ENCODE measurements at regions of chr5 and their contacts with region 1.

Region 1: DNA sequence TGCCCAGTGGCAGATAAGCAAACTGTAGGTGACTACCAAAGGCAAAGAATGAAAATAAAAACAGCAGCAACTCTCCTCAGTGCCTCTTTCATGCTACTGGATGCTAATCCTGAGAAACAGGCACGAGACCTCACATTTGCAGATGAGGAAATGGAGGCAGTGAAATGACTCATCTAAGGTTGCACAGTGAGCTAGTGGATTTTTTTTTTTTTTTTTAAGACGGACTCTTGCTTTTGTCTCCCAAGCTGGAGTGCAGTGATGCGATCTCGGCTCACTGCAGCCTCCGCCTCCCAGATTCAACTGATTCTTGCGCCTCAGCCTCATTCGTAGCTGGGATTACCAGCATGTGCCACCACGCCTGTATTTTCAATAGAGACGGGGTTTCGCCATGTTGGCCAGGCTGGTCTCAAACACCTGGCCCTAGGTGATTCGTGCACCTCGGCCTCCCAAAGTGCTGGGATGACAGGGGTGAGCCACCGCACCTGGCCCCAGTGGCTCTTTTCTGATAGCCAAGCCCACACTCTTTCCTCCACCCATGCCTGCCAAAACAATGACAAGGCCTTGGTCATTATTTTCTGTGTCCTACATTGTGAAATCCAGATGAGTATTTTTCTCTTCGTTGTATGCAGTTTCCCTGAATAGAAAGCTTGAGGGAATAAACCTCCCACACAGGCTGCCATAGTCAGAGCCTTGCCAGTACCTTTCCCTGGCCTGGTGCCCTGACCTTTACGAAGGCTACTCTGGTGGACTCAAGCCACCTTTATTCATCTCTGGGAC is 19.2 kb downstream of the DOCK2 start:
- DNase-seq: no peak
- ATAC-seq: peak; percentile 76
- H3K4me3 Mint-ChIP-seq: peak overlapping the region; percentile 33
- H3K27ac Mint-ChIP-seq: peak overlapping the region; percentile 59
- H3K4me1 Mint-ChIP-seq: peaks cover 71% of the 10 kb centered on the region
- H3K27me3 Mint-ChIP-seq: no peaks in the 10 kb centered on the region
- CTCF ChIP-seq: no peak

Region 2: DNA sequence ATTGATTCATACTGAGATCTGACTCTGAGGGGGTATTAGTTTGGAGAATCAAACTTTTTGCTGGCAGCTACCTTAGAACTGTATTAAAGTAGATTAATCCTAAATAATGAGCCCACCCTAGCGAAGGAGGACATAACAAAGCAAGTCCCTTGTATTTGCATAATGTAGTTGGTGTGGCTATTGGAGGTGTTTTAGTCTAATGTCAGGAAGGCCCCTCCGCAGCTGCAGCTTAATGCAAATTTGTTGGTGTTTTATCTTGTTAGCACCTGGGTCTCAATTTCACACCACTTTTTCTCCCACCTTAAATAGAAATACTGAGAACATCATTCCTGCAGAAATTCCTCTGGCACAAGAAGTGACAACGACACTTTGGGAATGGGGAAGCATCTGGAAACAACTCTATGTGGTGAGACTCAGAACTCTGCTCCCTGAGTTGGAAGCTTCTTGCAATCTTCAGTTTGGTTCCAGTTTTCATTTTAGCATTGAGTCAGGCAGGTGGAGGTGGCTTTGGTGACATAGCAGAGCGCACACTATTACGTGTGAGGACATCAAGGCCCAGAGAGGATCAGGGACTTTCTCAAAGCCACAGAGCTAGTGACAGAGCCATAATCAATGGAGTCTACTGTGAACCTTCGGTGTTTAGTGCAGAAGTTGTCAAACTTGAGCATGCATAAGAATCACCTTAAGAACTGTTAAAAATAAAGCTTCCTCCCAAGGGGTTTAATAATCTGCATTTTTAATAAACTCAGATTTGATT is 14.6 kb after region 1 on chr5:
- CTCF ChIA-PET with region 1: no interaction called
- POLR2A ChIA-PET with region 1: interaction called, 3 read pairs
- intact Hi-C with region 1: loop called (anchors 2 kb)
- DNase-seq: no peak
- ATAC-seq: peak; percentile 87
- H3K4me3 Mint-ChIP-seq: no peak overlapping the region
- H3K27ac Mint-ChIP-seq: peak overlapping the region; percentile 47
- H3K4me1 Mint-ChIP-seq: peaks cover 35% of the 10 kb centered on the region
- H3K27me3 Mint-ChIP-seq: no peaks in the 10 kb centered on the region
- CTCF ChIP-seq: no peak

Region 3: GRCh38 chr5:169701910-169702451 is 45.7 kb after region 1 on chr5:
- CTCF ChIA-PET with region 1: no interaction called
- POLR2A ChIA-PET with region 1: no interaction called
- intact Hi-C with region 1: loop called (anchors 5 kb)
- DNase-seq: no peak
- ATAC-seq: no peak
- H3K4me3 Mint-ChIP-seq: no peak overlapping the region
- H3K27ac Mint-ChIP-seq: peak overlapping the region; percentile 81
- H3K4me1 Mint-ChIP-seq: peaks cover 51% of the 10 kb centered on the region
- H3K27me3 Mint-ChIP-seq: no peaks in the 10 kb centered on the region
- CTCF ChIP-seq: no peak